ENCODE measurements at regions of chr13 and their contacts with region 1.

Region 1: GRCh38 chr13:30408319-30409101 is 13.8 kb upstream of the UBE2L5 start:
- DNase-seq: peak; percentile 87 to 91 (median 87)
- H3K4me3 ChIP-seq: peak overlapping the region in 1 of 2 donors; percentile 33
- H3K4me3 Mint-ChIP-seq: peak overlapping the region; percentile 46 to 79 (median 68)
- H3K27ac ChIP-seq: peak overlapping the region; percentile 40
- H3K27ac Mint-ChIP-seq: peak overlapping the region; percentile 75 to 91 (median 87)
- H3K4me1 ChIP-seq: peaks cover 14% of the 10 kb centered on the region
- H3K4me1 Mint-ChIP-seq: peaks cover 14 to 52% (median 27%) of the 10 kb centered on the region in 4 donors
- H3K27me3 ChIP-seq: no peaks in the 10 kb centered on the region
- H3K27me3 Mint-ChIP-seq: no peaks in the 10 kb centered on the region

Region 2: GRCh38 chr13:29918885-29919223 is 489.7 kb before region 1 on chr13:
- CTCF ChIA-PET with region 1: no interaction called
- POLR2A ChIA-PET with region 1: no interaction called
- intact Hi-C with region 1: no loop called
- DNase-seq: no peak
- H3K4me3 ChIP-seq: no peak overlapping the region
- H3K4me3 Mint-ChIP-seq: no peak overlapping the region
- H3K27ac ChIP-seq: no peak overlapping the region
- H3K27ac Mint-ChIP-seq: peak overlapping the region in 1 of 7 donors; percentile 15
- H3K4me1 ChIP-seq: peaks cover 16% of the 10 kb centered on the region
- H3K4me1 Mint-ChIP-seq: peaks cover 15 to 26% (median 20%) of the 10 kb centered on the region in 4 donors
- H3K27me3 ChIP-seq: no peaks in the 10 kb centered on the region
- H3K27me3 Mint-ChIP-seq: no peaks in the 10 kb centered on the region

Region 3: GRCh38 chr13:30395192-30396084 is 13.1 kb before region 1 on chr13:
- CTCF ChIA-PET with region 1: interaction called, 25 read pairs
- POLR2A ChIA-PET with region 1: interaction called, 48 read pairs
- intact Hi-C with region 1: loop called (anchors 1 kb)
- DNase-seq: peak; percentile 67 to 90 (median 75)
- H3K4me3 ChIP-seq: peak overlapping the region; percentile 87 to 90
- H3K4me3 Mint-ChIP-seq: peak overlapping the region; percentile 89 to 97 (median 91)
- H3K27ac ChIP-seq: peak overlapping the region; percentile 69
- H3K27ac Mint-ChIP-seq: peak overlapping the region; percentile 84 to 97 (median 95)
- H3K4me1 ChIP-seq: peaks cover 36% of the 10 kb centered on the region
- H3K4me1 Mint-ChIP-seq: peaks cover 19 to 61% (median 38%) of the 10 kb centered on the region in 4 donors
- H3K27me3 ChIP-seq: no peaks in the 10 kb centered on the region
- H3K27me3 Mint-ChIP-seq: no peaks in the 10 kb centered on the region

Region 4: GRCh38 chr13:30453727-30454126 is 45.2 kb after region 1 on chr13:
- CTCF ChIA-PET with region 1: interaction called, 6 read pairs
- POLR2A ChIA-PET with region 1: no interaction called
- intact Hi-C with region 1: loop called (anchors 2 kb)
- DNase-seq: no peak
- H3K4me3 ChIP-seq: no peak overlapping the region
- H3K4me3 Mint-ChIP-seq: no peak overlapping the region
- H3K27ac ChIP-seq: no peak overlapping the region
- H3K27ac Mint-ChIP-seq: peak overlapping the region in 2 of 7 donors; percentile 3 to 30
- H3K4me1 ChIP-seq: no peaks in the 10 kb centered on the region
- H3K4me1 Mint-ChIP-seq: peaks cover 12 to 23% (median 16%) of the 10 kb centered on the region in 4 donors
- H3K27me3 ChIP-seq: no peaks in the 10 kb centered on the region
- H3K27me3 Mint-ChIP-seq: no peaks in the 10 kb centered on the region

Region 5: DNA sequence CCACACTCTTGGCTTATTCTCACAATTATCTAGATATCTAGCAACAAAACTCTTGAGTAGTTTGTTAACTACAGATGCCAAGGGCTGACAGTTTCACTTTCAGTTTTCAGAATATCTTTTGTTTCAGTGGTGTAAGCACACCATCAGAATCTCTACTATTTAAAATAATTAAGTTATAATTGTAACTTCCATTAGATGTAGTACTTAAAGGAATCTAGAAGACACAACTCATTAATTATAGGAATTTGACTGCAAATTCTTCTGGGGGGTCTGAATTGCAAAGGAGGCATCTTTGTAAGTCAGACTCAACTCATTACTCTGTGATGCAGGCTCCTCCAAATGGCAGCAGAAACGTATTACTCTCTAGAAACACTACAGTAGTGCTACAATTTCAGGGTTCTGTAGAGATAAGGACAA is 164.4 kb after region 1 on chr13:
- CTCF ChIA-PET with region 1: interaction called, 3 read pairs
- POLR2A ChIA-PET with region 1: no interaction called
- intact Hi-C with region 1: loop called (anchors 2 kb)
- DNase-seq: peak; percentile 33 to 53 (median 43)
- H3K4me3 ChIP-seq: peak overlapping the region; percentile 37 to 64
- H3K4me3 Mint-ChIP-seq: peak overlapping the region; percentile 67 to 88 (median 79)
- H3K27ac ChIP-seq: peak overlapping the region; percentile 62
- H3K27ac Mint-ChIP-seq: peak overlapping the region; percentile 56 to 94 (median 91)
- H3K4me1 ChIP-seq: peaks cover 36% of the 10 kb centered on the region
- H3K4me1 Mint-ChIP-seq: peaks cover 28 to 47% (median 33%) of the 10 kb centered on the region in 4 donors
- H3K27me3 ChIP-seq: no peaks in the 10 kb centered on the region
- H3K27me3 Mint-ChIP-seq: no peaks in the 10 kb centered on the region

Region 6: DNA sequence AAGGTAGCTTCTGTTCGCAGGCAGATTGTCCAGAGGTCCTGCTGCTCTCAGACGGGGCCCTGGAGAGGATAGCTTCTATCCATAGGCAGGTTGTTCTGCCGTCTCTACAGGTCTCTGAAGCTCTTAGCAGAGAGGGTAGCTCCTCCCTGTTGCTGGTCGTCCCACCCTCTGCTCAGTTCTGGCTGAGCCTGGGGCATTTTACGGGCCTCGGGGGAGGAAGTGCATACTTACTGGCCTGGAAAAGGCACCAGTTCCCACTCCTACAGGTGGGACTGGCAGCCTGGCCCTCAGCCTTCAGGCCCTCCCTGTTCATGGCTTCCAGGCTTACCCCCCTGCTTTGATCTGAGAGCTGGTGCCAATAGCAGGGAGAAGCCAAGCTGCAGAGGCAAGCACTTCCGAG is 251.5 kb after region 1 on chr13:
- CTCF ChIA-PET with region 1: no interaction called
- POLR2A ChIA-PET with region 1: no interaction called
- intact Hi-C with region 1: no loop called
- DNase-seq: no peak
- H3K4me3 ChIP-seq: no peak overlapping the region
- H3K4me3 Mint-ChIP-seq: no peak overlapping the region
- H3K27ac ChIP-seq: no peak overlapping the region
- H3K27ac Mint-ChIP-seq: no peak overlapping the region
- H3K4me1 ChIP-seq: no peaks in the 10 kb centered on the region
- H3K4me1 Mint-ChIP-seq: peaks cover 0 to 9% (median 4%) of the 10 kb centered on the region in 4 donors
- H3K27me3 ChIP-seq: no peaks in the 10 kb centered on the region
- H3K27me3 Mint-ChIP-seq: no peaks in the 10 kb centered on the region

Measured in CD4-positive, alpha-beta memory T cell (primary cell).